ENCODE measurements at regions of chr16 and their contacts with region 1.

Region 1: DNA sequence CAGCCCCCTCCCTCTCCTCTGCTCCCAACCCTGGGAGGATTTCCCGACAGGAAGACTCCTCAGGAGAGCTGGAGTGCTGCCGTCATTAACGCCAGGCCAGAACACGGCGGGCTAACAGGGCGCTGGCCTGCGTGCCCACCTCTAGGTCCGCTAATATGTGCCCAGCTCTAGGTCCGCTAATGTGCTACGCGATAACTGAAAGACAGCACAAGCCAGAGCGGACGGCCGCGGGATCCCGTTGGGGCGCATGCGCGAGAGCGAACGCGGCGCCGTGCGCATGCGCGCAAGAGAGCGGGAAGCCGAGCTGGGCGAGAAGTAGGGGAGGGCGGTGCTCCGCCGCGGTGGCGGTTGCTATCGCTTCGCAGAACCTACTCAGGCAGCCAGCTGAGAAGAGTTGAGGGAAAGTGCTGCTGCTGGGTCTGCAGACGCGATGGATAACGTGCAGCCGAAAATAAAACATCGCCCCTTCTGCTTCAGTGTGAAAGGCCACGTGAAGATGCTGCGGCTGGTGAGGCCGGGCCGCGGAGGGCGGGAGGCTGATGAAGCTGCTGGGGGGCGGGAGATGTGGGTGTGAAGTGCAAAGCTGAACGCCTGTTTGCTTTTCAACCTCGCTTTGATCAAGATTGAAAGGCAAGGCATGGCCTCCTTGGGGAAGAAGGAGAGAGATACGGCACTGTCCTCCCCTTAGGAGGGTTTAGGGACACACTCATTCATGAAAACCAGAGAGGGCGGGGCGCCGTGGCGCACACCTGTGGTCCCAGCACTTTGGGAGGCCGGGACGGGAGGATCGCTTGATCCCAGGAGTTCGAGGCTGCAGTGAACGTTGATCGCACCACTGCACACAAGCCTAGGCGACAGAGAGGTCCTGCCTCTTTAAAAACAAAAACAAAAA is at the start of gene CKLF:
- DNase-seq: peak; percentile 84 to 96 (median 92)
- ATAC-seq: peak; percentile 83
- H3K4me3 ChIP-seq: peak within 1 kb of the TSS; percentile 94
- H3K4me3 Mint-ChIP-seq: peak within 1 kb of the TSS; percentile 92 to 99 (median 95)
- H3K27ac ChIP-seq: peak within 1 kb of the TSS; percentile 77
- H3K27ac Mint-ChIP-seq: peak within 1 kb of the TSS; percentile 91 to 97 (median 94)
- H3K4me1 ChIP-seq: peaks cover 49 to 68% of the 10 kb centered on the region in 2 donors
- H3K4me1 Mint-ChIP-seq: peaks cover 59 to 85% (median 80%) of the 10 kb centered on the region in 7 donors
- H3K27me3 ChIP-seq: no peaks in the 10 kb centered on the region
- H3K27me3 Mint-ChIP-seq: peaks cover 0 to 2% (median 0%) of the 10 kb centered on the region in 5 donors
- total RNA-seq, gene CKLF: 24.1 to 160 (median 42.9) TPM

Region 2: GRCh38 chr16:66516808-66517585 is 35.5 kb before region 1 on chr16:
- CTCF ChIA-PET with region 1: interaction called, 24 read pairs
- POLR2A ChIA-PET with region 1: interaction called, 164 read pairs
- intact Hi-C with region 1: loop called (anchors 1 kb)
- DNase-seq: peak in 6 of 9 donors; percentile 36 to 80 (median 44)
- ATAC-seq: peak; percentile 92
- H3K4me3 ChIP-seq: peak overlapping the region; percentile 22
- H3K4me3 Mint-ChIP-seq: peak overlapping the region; percentile 23 to 88 (median 72)
- H3K27ac ChIP-seq: peak overlapping the region; percentile 58
- H3K27ac Mint-ChIP-seq: peak overlapping the region; percentile 67 to 99 (median 89)
- H3K4me1 ChIP-seq: peaks cover 54 to 61% of the 10 kb centered on the region in 2 donors
- H3K4me1 Mint-ChIP-seq: peaks cover 60 to 79% (median 71%) of the 10 kb centered on the region in 7 donors
- H3K27me3 ChIP-seq: no peaks in the 10 kb centered on the region
- H3K27me3 Mint-ChIP-seq: no peaks in the 10 kb centered on the region

Region 3: GRCh38 chr16:66588981-66589713 is 36.6 kb after region 1 on chr16:
- CTCF ChIA-PET with region 1: interaction called, 10 read pairs
- POLR2A ChIA-PET with region 1: interaction called, 5 read pairs
- intact Hi-C with region 1: loop called (anchors 1 kb)
- DNase-seq: peak; percentile 36 to 73 (median 60)
- ATAC-seq: peak; percentile 98
- H3K4me3 ChIP-seq: no peak overlapping the region
- H3K4me3 Mint-ChIP-seq: peak overlapping the region; percentile 73 to 96 (median 87)
- H3K27ac ChIP-seq: no peak overlapping the region
- H3K27ac Mint-ChIP-seq: peak overlapping the region; percentile 75 to 90 (median 83)
- H3K4me1 ChIP-seq: peaks cover 6 to 7% of the 10 kb centered on the region in 2 donors
- H3K4me1 Mint-ChIP-seq: peaks cover 27 to 51% (median 39%) of the 10 kb centered on the region in 7 donors
- H3K27me3 ChIP-seq: no peaks in the 10 kb centered on the region
- H3K27me3 Mint-ChIP-seq: peaks cover 0 to 2% (median 0%) of the 10 kb centered on the region in 5 donors

Region 4: DNA sequence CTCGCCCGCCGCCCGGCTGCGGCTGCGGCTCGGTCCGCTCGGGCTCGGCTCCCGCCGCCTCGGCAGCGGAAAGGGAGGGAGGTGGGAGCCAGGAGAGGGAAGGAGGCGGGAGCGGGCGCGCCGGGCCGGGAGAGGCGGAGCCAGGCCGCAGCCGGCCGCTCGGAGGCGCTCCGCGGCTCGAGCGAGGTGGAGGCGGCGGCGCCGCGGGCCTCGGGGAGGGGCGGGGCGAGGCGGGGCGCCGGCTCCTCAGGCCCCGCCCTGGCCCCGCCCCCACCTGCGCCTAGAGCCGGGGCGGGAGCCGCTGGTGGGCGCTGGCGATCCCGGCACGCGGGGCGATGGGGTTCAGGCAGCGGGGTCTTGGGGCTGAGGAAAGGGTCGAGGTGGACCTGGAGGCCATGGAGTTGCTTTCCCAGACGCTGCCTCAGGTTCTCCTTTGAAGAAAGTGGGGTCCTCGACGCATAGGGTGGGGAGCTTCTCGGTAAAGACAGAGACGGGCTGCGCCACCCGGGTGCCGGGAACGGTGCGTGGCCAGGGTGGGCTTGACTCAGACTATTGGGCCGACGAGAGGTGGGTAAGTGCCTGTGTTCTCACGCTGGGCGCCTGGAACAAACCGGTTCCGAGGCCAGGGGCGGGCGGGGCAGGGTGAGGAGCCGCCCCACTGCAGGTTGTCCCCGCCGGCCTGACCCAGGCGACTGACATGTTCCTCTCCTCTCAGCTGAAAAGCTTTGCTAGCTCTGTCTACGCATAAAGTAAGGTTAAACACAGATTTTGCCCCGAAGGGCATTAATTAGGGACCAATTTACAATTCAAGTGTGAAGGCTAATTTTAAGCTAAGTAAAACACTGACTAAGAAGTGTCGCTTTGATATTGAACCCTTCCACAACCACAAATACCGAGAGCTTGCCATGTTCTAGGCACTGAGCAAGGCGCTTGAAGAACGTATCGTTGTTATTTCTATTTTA is 144.4 kb after region 1 on chr16 and contains the start of gene CMTM4:
- CTCF ChIA-PET with region 1: no interaction called
- POLR2A ChIA-PET with region 1: no interaction called
- intact Hi-C with region 1: loop called in 1 of 2 experiments (anchors 5 kb)
- DNase-seq: peak; percentile 56 to 85 (median 72)
- ATAC-seq: peak; percentile 98
- H3K4me3 ChIP-seq: peak within 1 kb of the TSS; percentile 69
- H3K4me3 Mint-ChIP-seq: peak within 1 kb of the TSS; percentile 77 to 91 (median 83)
- H3K27ac ChIP-seq: peak within 1 kb of the TSS; percentile 45
- H3K27ac Mint-ChIP-seq: peak within 1 kb of the TSS in 5 of 9 donors; percentile 36 to 81 (median 47)
- H3K4me1 ChIP-seq: peaks cover 5 to 10% of the 10 kb centered on the region in 2 donors
- H3K4me1 Mint-ChIP-seq: peaks cover 6 to 16% (median 12%) of the 10 kb centered on the region in 7 donors
- H3K27me3 ChIP-seq: no peaks in the 10 kb centered on the region
- H3K27me3 Mint-ChIP-seq: peaks cover 0 to 57% (median 7%) of the 10 kb centered on the region in 5 donors
- total RNA-seq, gene CMTM4: 1.5 to 2.5 (median 1.8) TPM

Region 5: DNA sequence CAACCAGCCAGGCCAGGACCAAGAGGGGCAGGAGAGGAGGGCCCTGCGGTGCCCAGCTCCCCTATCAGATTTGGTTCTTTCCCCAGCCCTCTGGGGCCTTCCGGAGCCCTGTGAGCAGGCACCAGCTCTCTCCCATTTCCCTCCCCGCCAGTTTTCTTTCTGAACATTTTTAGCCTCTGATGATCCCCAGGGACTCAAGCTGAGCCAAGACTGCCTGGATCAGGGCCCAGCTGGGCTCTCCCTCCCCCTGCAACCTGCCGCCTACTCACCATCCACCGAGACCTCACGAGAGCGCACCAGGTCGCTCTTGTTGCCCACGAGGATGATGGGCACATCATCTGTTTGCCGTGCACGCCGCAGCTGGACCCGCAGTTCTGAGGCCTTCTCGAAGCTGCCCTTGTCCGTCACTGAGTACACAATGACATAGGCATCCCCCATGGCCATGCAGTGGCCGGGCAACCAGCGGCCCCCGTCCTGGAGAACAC is 370.8 kb after region 1 on chr16:
- CTCF ChIA-PET with region 1: no interaction called
- POLR2A ChIA-PET with region 1: no interaction called
- intact Hi-C with region 1: no loop called
- DNase-seq: no peak
- ATAC-seq: no peak
- H3K4me3 ChIP-seq: no peak overlapping the region
- H3K4me3 Mint-ChIP-seq: no peak overlapping the region
- H3K27ac ChIP-seq: no peak overlapping the region
- H3K27ac Mint-ChIP-seq: no peak overlapping the region
- H3K4me1 ChIP-seq: no peaks in the 10 kb centered on the region
- H3K4me1 Mint-ChIP-seq: peaks cover 0 to 16% (median 5%) of the 10 kb centered on the region in 7 donors
- H3K27me3 ChIP-seq: peaks cover 0 to 13% of the 10 kb centered on the region in 2 donors
- H3K27me3 Mint-ChIP-seq: peaks cover 18 to 45% (median 24%) of the 10 kb centered on the region in 5 donors

Region 6: GRCh38 chr16:66934153-66934838 is 381.8 kb after region 1 on chr16 and contains the start of gene CIAO2B:
- CTCF ChIA-PET with region 1: no interaction called
- POLR2A ChIA-PET with region 1: no interaction called
- intact Hi-C with region 1: loop called in 1 of 2 experiments (anchors 1 kb)
- DNase-seq: peak; percentile 86 to 95 (median 91)
- ATAC-seq: peak; percentile 93
- H3K4me3 ChIP-seq: peak within 1 kb of the TSS; percentile 96
- H3K4me3 Mint-ChIP-seq: peak within 1 kb of the TSS; percentile 91 to 99 (median 98)
- H3K27ac ChIP-seq: peak within 1 kb of the TSS; percentile 97
- H3K27ac Mint-ChIP-seq: peak within 1 kb of the TSS; percentile 96 to 99 (median 98)
- H3K4me1 ChIP-seq: peaks cover 24 to 35% of the 10 kb centered on the region in 2 donors
- H3K4me1 Mint-ChIP-seq: peaks cover 38 to 63% (median 54%) of the 10 kb centered on the region in 7 donors
- H3K27me3 ChIP-seq: no peaks in the 10 kb centered on the region
- H3K27me3 Mint-ChIP-seq: no peaks in the 10 kb centered on the region
- total RNA-seq, gene CIAO2B: 47.0 to 116 (median 58.5) TPM

Measured in naive thymus-derived CD4-positive, alpha-beta T cell (primary cell).